Activated CD4-positive, alpha-beta T cell treated with anti-CD3 and anti-CD28 coated beads for 36 hours (primary cell): ENCODE measurements at regions of chr20 and their contacts with region 1.

Region 1: GRCh38 chr20:1212607-1213396 is 9.5 kb downstream of the C20orf202 start:
- DNase-seq: peak; percentile 86
- ATAC-seq: peak; percentile 66
- H3K4me3 Mint-ChIP-seq: no peak overlapping the region
- H3K27ac Mint-ChIP-seq: no peak overlapping the region
- H3K4me1 Mint-ChIP-seq: peaks cover 36% of the 10 kb centered on the region
- H3K27me3 Mint-ChIP-seq: peaks cover 3% of the 10 kb centered on the region

Region 2: GRCh38 chr20:504632-505075 is 708.1 kb before region 1 on chr20:
- CTCF ChIA-PET with region 1: no interaction called
- POLR2A ChIA-PET with region 1: no interaction called
- intact Hi-C with region 1: no loop called
- DNase-seq: no peak
- ATAC-seq: no peak
- H3K4me3 Mint-ChIP-seq: no peak overlapping the region
- H3K27ac Mint-ChIP-seq: no peak overlapping the region
- H3K4me1 Mint-ChIP-seq: peaks cover 9% of the 10 kb centered on the region
- H3K27me3 Mint-ChIP-seq: no peaks in the 10 kb centered on the region

Region 3: GRCh38 chr20:891058-891705 is 321.6 kb before region 1 on chr20:
- CTCF ChIA-PET with region 1: no interaction called
- POLR2A ChIA-PET with region 1: no interaction called
- intact Hi-C with region 1: no loop called
- DNase-seq: no peak
- ATAC-seq: no peak
- H3K4me3 Mint-ChIP-seq: no peak overlapping the region
- H3K27ac Mint-ChIP-seq: no peak overlapping the region
- H3K4me1 Mint-ChIP-seq: no peaks in the 10 kb centered on the region
- H3K27me3 Mint-ChIP-seq: peaks cover 9% of the 10 kb centered on the region

Region 4: DNA sequence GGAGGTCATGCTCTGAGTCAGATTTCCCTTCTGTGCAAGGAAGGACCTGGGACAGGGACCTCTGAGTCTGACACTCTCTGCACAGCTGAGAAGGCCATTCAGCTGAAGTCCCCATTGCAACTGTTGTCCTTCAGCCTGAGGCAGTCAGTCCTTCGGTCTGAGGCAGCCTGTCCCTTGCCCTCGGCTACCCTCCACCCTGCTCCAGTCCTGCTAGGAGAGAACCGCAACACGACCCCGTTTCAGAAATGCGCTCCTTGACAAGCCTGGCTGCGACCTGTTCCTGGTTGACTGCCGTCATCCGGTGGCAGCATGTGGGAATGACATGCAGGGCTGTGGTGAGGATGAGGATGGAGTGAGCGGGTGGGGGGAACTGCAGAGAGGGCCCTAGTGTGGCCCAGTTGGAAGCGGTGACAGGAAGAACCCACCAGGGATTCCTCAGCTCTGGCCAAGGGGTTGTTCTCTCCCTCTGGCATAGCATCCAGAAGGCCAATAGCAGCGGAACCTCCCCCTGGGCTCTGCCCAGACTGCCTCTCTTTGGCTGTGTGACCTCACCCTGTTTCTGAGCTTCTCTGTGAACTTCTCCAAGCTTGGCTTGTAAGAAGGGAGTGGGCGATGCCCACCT is 256.4 kb before region 1 on chr20:
- CTCF ChIA-PET with region 1: interaction called, 4 read pairs
- POLR2A ChIA-PET with region 1: interaction called, 3 read pairs
- intact Hi-C with region 1: loop called in 1 of 2 experiments (anchors 5 kb)
- DNase-seq: peak; percentile 84
- ATAC-seq: peak; percentile 89
- H3K4me3 Mint-ChIP-seq: no peak overlapping the region
- H3K27ac Mint-ChIP-seq: no peak overlapping the region
- H3K4me1 Mint-ChIP-seq: no peaks in the 10 kb centered on the region
- H3K27me3 Mint-ChIP-seq: peaks cover 20% of the 10 kb centered on the region

Region 5: DNA sequence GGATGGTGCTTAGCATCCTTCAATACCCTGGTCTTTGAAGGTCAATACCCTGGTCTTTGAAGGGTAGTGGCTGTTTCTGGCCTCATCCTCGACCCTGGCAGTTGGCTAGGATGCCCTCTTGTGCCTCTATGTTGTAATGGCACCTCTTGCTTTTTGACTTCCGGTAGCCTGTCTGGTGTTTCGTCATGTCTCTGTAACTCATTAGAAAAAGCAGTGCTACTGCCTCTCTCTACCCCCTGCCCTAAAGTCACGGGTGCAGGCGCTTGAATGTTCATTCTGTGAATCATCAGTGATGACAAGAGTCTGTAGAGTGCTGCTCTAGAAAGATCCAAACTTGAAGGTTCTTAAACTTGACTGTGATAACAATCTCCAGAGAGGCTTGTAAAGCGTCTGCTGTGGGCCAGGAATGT is 239.0 kb before region 1 on chr20:
- CTCF ChIA-PET with region 1: interaction called, 3 read pairs
- POLR2A ChIA-PET with region 1: no interaction called
- intact Hi-C with region 1: loop called in 1 of 2 experiments (anchors 1 kb)
- DNase-seq: peak; percentile 63
- ATAC-seq: peak; percentile 95
- H3K4me3 Mint-ChIP-seq: no peak overlapping the region
- H3K27ac Mint-ChIP-seq: peak overlapping the region; percentile 66
- H3K4me1 Mint-ChIP-seq: peaks cover 2% of the 10 kb centered on the region
- H3K27me3 Mint-ChIP-seq: no peaks in the 10 kb centered on the region

Region 6: GRCh38 chr20:1108437-1108920 is 104.3 kb before region 1 on chr20:
- CTCF ChIA-PET with region 1: interaction called, 11 read pairs
- POLR2A ChIA-PET with region 1: no interaction called
- intact Hi-C with region 1: loop called in 1 of 2 experiments (anchors 1 kb)
- DNase-seq: peak; percentile 76
- ATAC-seq: peak; percentile 81
- H3K4me3 Mint-ChIP-seq: no peak overlapping the region
- H3K27ac Mint-ChIP-seq: no peak overlapping the region
- H3K4me1 Mint-ChIP-seq: no peaks in the 10 kb centered on the region
- H3K27me3 Mint-ChIP-seq: no peaks in the 10 kb centered on the region

Region 7: GRCh38 chr20:1185790-1186334 is 26.9 kb before region 1 on chr20:
- CTCF ChIA-PET with region 1: interaction called, 7 read pairs
- POLR2A ChIA-PET with region 1: interaction called, 3 read pairs
- intact Hi-C with region 1: loop called in 1 of 2 experiments (anchors 1 kb)
- DNase-seq: peak; percentile 79
- ATAC-seq: peak; percentile 82
- H3K4me3 Mint-ChIP-seq: peak overlapping the region; percentile 32
- H3K27ac Mint-ChIP-seq: no peak overlapping the region
- H3K4me1 Mint-ChIP-seq: peaks cover 6% of the 10 kb centered on the region
- H3K27me3 Mint-ChIP-seq: peaks cover 24% of the 10 kb centered on the region

Region 8: DNA sequence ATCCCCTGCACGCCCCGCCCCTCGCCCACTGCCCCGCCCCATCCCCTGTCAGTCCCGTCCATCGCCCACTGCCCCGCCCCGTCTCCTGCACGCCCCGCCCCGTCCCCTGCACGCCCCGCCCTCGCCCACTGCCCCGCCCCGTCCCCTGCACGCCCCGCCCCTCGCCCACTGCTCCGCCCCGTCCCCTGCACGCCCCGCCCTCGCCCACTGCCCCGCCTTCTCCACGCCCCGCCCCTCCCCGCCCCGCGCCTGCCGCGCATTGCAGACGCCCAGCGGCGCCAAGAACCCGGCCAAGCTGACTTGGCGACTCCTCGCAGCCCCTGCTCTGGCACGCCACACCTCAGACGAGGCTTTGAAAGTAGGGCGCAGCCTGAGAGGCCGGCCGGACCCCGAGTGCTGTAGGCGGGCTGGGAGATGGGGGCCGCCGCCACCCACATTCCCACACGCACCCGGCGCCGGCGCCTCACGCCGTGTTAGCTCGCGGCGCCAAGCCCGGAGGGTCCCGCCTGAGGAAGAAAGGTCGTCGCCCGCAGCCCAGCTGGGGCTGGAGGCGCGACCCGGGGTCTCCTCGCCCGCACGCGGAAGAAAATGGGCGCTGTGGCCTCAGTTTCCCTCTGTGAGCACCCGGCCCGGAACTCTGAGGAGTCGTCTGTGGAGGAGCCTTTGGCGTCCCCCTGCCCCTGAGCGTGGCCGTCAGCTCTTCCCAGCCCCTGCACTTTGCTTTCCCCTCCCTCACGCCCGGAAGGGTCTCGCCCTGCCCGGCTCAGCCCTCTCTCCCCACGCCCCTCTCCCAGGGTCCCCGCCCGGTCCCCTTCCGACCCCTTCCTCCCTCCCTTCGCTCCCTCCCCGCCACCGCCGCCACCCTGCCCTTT is 13.2 kb after region 1 on chr20 and contains the start of gene RAD21L1:
- CTCF ChIA-PET with region 1: interaction called, 5 read pairs
- POLR2A ChIA-PET with region 1: no interaction called
- intact Hi-C with region 1: loop called in 1 of 2 experiments (anchors 1 kb)
- DNase-seq: peak; percentile 94
- ATAC-seq: peak; percentile 85
- H3K4me3 Mint-ChIP-seq: peak within 1 kb of the TSS; percentile 75
- H3K27ac Mint-ChIP-seq: peak within 1 kb of the TSS; percentile 79
- H3K4me1 Mint-ChIP-seq: peaks cover 11% of the 10 kb centered on the region
- H3K27me3 Mint-ChIP-seq: peaks cover 9% of the 10 kb centered on the region
- total RNA-seq, gene RAD21L1: 0.32 TPM in 1 of 2 experiments, not detected in the other